CD4-positive, alpha-beta T cell (primary cell): ENCODE measurements at regions of chr1 and their contacts with region 1.

Region 1: GRCh38 chr1:165597883-165598675 is 33.0 kb upstream of the MGST3 start:
- DNase-seq: peak; percentile 65 to 96 (median 81)
- ATAC-seq: peak; percentile 92
- H3K4me3 ChIP-seq: peak overlapping the region; percentile 58
- H3K4me3 Mint-ChIP-seq: peak overlapping the region; percentile 88
- H3K27ac ChIP-seq: no peak overlapping the region
- H3K27ac Mint-ChIP-seq: peak overlapping the region; percentile 38
- H3K4me1 ChIP-seq: peaks cover 19% of the 10 kb centered on the region
- H3K4me1 Mint-ChIP-seq: peaks cover 33% of the 10 kb centered on the region
- H3K27me3 ChIP-seq: peaks cover 18 to 24% of the 10 kb centered on the region in 2 experiments
- H3K27me3 Mint-ChIP-seq: peaks cover 49% of the 10 kb centered on the region
- CTCF ChIP-seq: no peak

Region 2: DNA sequence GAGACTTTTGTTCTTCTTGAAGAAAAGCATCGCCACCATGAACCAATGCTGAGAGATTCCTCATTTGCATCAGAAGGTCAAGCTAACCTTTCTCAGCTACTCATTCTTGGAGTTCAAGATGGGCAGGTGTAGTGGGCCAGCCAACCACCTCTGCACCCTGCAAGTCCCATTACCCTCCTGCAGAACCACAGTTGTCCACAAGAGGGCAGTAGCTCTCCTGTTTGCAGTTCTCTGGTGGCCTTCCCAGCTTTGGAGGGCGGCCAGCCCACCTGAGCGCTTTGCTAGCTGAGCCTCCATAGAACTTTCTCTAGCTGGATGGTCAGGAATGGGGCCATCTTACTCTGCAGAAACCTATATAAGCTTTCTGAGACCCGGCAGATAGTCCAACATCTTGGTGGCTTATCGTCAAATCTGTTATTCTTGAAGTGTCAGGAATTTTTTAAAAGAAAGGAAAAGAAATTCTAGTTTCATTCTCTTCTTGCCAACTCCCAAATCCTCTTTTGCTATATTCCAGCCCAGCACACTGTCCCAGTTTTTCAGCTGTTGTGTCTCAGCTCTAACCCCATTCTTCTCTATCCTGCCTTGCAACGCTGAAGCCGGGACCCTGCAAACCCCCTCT is 230.6 kb before region 1 on chr1:
- CTCF ChIA-PET with region 1: interaction called, 16 read pairs
- POLR2A ChIA-PET with region 1: no interaction called
- intact Hi-C with region 1: loop called in 1 of 2 experiments (anchors 1 kb)
- DNase-seq: peak; percentile 59 to 84 (median 74)
- ATAC-seq: peak; percentile 65
- H3K4me3 ChIP-seq: no peak overlapping the region
- H3K4me3 Mint-ChIP-seq: no peak overlapping the region
- H3K27ac ChIP-seq: no peak overlapping the region
- H3K27ac Mint-ChIP-seq: no peak overlapping the region
- H3K4me1 ChIP-seq: peaks cover 6% of the 10 kb centered on the region
- H3K4me1 Mint-ChIP-seq: no peaks in the 10 kb centered on the region
- H3K27me3 ChIP-seq: peaks cover 13 to 48% of the 10 kb centered on the region in 2 experiments
- H3K27me3 Mint-ChIP-seq: peaks cover 79% of the 10 kb centered on the region
- CTCF ChIP-seq: peak; percentile 97

Region 3: GRCh38 chr1:165403835-165404482 is 194.1 kb before region 1 on chr1:
- CTCF ChIA-PET with region 1: interaction called, 5 read pairs
- POLR2A ChIA-PET with region 1: no interaction called
- intact Hi-C with region 1: loop called in 1 of 2 experiments (anchors 1 kb)
- DNase-seq: peak in 7 of 14 experiments; percentile 7 to 55 (median 33)
- ATAC-seq: peak; percentile 62
- H3K4me3 ChIP-seq: no peak overlapping the region
- H3K4me3 Mint-ChIP-seq: no peak overlapping the region
- H3K27ac ChIP-seq: no peak overlapping the region
- H3K27ac Mint-ChIP-seq: no peak overlapping the region
- H3K4me1 ChIP-seq: no peaks in the 10 kb centered on the region
- H3K4me1 Mint-ChIP-seq: no peaks in the 10 kb centered on the region
- H3K27me3 ChIP-seq: peaks cover 10 to 25% of the 10 kb centered on the region in 2 experiments
- H3K27me3 Mint-ChIP-seq: peaks cover 61% of the 10 kb centered on the region
- CTCF ChIP-seq: no peak

Region 4: DNA sequence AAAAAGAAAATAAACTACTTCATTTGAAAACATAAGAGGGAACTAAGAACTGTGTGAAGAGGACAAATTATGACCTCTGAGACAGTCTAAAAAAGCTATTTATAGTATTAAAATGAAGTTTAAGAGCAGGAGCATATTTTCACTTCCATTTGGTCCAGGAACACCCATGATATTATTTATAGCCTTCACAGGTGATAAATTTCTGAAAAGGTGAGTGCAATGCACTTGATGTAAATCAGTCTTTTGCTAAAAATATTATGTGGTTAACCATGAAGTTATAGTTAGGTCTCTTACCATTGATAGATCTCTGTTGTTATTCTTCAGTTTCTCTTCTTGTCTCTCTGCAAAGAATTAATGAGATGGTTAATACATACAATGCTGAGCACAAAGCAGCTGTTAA is 155.9 kb after region 1 on chr1:
- CTCF ChIA-PET with region 1: no interaction called
- POLR2A ChIA-PET with region 1: no interaction called
- intact Hi-C with region 1: no loop called
- DNase-seq: no peak
- ATAC-seq: no peak
- H3K4me3 ChIP-seq: no peak overlapping the region
- H3K4me3 Mint-ChIP-seq: no peak overlapping the region
- H3K27ac ChIP-seq: no peak overlapping the region
- H3K27ac Mint-ChIP-seq: no peak overlapping the region
- H3K4me1 ChIP-seq: no peaks in the 10 kb centered on the region
- H3K4me1 Mint-ChIP-seq: peaks cover 28% of the 10 kb centered on the region
- H3K27me3 ChIP-seq: no peaks in the 10 kb centered on the region
- H3K27me3 Mint-ChIP-seq: no peaks in the 10 kb centered on the region
- CTCF ChIP-seq: no peak

Region 5: DNA sequence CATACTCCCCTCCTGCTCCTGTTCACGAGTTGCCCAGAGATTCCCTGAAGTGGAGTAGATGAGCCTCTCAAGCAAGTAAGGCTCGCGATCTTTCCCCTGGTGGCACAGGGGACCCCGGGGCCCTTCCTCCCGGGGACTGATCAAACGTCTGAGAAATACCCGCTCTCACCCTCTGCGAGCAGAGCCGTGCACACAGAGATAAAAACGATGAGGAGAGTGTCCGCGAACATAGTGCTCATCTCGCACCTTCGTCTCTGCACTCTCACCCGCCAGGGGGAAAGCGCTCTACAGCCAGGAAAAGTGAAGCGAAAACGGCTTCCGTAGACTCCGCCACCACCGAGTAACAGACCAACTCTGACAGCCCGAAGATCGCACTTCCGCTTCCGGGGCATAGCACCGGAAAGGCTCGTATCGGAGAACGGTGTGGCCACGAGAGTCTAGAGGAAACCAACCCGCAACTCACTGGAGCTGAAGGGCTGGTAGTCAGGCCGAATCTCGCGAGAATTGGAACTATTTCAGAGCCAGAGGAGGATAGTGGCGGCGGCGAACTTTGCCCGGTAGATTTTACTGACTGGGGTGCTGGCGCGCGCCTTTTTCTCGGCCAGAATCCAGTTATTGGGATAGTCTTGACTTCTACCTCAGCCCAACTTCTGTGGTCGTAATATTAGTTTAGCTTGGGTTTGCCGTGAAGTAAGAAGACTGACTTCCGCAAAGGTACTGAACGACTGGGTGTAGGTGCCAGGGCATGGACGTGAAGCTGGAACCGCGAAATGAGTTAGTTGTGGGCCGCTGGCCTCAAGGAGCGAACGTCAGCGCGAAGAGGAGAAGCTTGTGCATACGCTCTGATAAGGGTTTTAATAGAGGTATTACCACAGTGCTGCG is 170.7 kb after region 1 on chr1 and contains the start of gene TMCO1:
- CTCF ChIA-PET with region 1: interaction called, 4 read pairs
- POLR2A ChIA-PET with region 1: interaction called, 4 read pairs
- intact Hi-C with region 1: loop called in 1 of 2 experiments (anchors 1 kb)
- DNase-seq: peak; percentile 85 to 99 (median 90)
- ATAC-seq: peak; percentile 93
- H3K4me3 ChIP-seq: peak within 1 kb of the TSS; percentile 76
- H3K4me3 Mint-ChIP-seq: peak within 1 kb of the TSS; percentile 95
- H3K27ac ChIP-seq: peak within 1 kb of the TSS; percentile 84 to 92
- H3K27ac Mint-ChIP-seq: peak within 1 kb of the TSS; percentile 93
- H3K4me1 ChIP-seq: peaks cover 28% of the 10 kb centered on the region
- H3K4me1 Mint-ChIP-seq: peaks cover 75% of the 10 kb centered on the region
- H3K27me3 ChIP-seq: no peaks in the 10 kb centered on the region
- H3K27me3 Mint-ChIP-seq: no peaks in the 10 kb centered on the region
- CTCF ChIP-seq: no peak
- total RNA-seq, gene TMCO1: 25.7 to 27.4 TPM